ENCODE measurements at regions of chr2 and their contacts with region 1.

Region 1: GRCh38 chr2:53802617-53803151 is 15.8 kb downstream of the ERLEC1 start:
- DNase-seq: no peak
- ATAC-seq: no peak
- H3K4me3 ChIP-seq: no peak overlapping the region
- H3K4me3 Mint-ChIP-seq: no peak overlapping the region
- H3K27ac ChIP-seq: no peak overlapping the region
- H3K27ac Mint-ChIP-seq: no peak overlapping the region
- H3K4me1 ChIP-seq: no peaks in the 10 kb centered on the region
- H3K4me1 Mint-ChIP-seq: no peaks in the 10 kb centered on the region
- H3K27me3 ChIP-seq: no peaks in the 10 kb centered on the region
- H3K27me3 Mint-ChIP-seq: no peaks in the 10 kb centered on the region
- CTCF ChIP-seq: no peak

Region 2: DNA sequence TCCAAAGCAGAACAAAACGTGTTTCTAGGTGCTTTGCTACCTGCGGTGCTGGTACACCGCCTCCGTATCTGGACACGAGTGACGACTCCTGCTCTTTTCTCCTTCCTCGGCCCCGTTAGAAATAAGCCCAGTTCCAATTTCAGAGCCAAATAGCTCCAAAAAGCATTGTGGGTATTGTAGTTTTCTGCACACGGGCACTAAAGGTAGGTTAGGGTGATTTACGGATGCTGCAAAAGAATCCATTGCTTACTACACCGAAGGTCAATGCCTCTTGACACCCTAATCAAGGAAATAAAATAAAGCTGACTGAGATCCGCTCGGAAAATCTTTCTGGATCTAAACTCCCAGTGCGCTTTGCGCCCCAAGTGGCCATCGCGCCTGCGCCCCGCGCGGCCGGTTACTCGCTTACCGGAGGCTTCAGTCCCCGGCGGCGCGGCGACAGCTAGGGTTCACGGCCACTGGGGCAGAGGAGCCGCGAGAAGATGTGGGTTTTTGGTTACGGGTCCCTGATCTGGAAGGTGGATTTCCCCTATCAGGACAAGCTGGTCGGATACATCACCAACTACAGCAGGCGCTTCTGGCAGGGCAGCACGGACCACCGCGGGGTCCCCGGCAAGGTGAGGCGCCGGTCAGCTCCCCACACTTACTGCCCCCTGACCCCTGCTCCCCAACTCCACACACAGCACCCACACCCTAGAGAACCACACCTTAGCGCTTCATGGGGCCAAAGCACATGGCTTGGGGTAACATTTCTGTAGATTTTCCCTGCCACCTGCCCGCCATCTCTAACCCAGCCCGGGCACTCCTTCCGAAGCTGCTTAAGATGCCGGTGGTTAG is 35.1 kb before region 1 on chr2 and contains the start of gene CHAC2:
- CTCF ChIA-PET with region 1: interaction called, 7 read pairs
- POLR2A ChIA-PET with region 1: no interaction called
- intact Hi-C with region 1: loop called in 1 of 2 experiments (anchors 5 kb)
- DNase-seq: peak; percentile 50 to 92 (median 84)
- ATAC-seq: peak; percentile 87
- H3K4me3 ChIP-seq: peak within 1 kb of the TSS; percentile 71 to 96
- H3K4me3 Mint-ChIP-seq: peak within 1 kb of the TSS; percentile 92
- H3K27ac ChIP-seq: peak within 1 kb of the TSS; percentile 70 to 86
- H3K27ac Mint-ChIP-seq: peak within 1 kb of the TSS; percentile 93
- H3K4me1 ChIP-seq: peaks cover 9% of the 10 kb centered on the region
- H3K4me1 Mint-ChIP-seq: peaks cover 29% of the 10 kb centered on the region
- H3K27me3 ChIP-seq: no peaks in the 10 kb centered on the region
- H3K27me3 Mint-ChIP-seq: no peaks in the 10 kb centered on the region
- CTCF ChIP-seq: peak; percentile 31
- total RNA-seq, gene CHAC2: 0.87 to 1.0 TPM

Region 3: GRCh38 chr2:54092940-54093339 is 290.3 kb after region 1 on chr2:
- CTCF ChIA-PET with region 1: no interaction called
- POLR2A ChIA-PET with region 1: no interaction called
- intact Hi-C with region 1: no loop called
- DNase-seq: peak in 2 of 9 experiments; percentile 6 to 17
- ATAC-seq: no peak
- H3K4me3 ChIP-seq: no peak overlapping the region
- H3K4me3 Mint-ChIP-seq: no peak overlapping the region
- H3K27ac ChIP-seq: no peak overlapping the region
- H3K27ac Mint-ChIP-seq: no peak overlapping the region
- H3K4me1 ChIP-seq: peaks cover 9% of the 10 kb centered on the region
- H3K4me1 Mint-ChIP-seq: peaks cover 21% of the 10 kb centered on the region
- H3K27me3 ChIP-seq: no peaks in the 10 kb centered on the region
- H3K27me3 Mint-ChIP-seq: no peaks in the 10 kb centered on the region
- CTCF ChIP-seq: no peak

Measured in CD8-positive, alpha-beta T cell (primary cell).